ENCODE measurements at regions of chr12 and their contacts with region 1.

Region 1: DNA sequence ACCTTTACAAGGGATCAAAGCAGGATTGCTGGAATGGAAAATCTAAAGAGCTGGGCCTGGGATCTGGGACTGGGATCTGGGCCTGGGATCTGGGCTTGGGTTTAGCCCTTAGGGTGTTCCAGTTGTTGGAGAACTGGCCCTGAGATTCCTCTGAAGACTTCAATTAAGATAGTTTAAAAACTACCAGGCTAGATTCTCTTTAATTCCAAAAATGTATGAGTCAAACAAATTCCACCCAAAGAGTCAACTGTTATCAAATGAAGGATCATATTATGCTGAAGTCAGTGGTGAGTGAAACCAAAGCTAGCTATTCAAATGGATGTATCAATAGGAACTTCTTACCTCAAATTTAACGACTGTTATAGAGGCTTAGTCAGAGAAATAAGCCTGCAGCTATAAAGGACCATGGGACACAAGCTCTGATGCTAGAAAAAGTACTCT is 40.5 kb downstream of the LIMA1 start:
- DNase-seq: peak; percentile 77
- H3K4me3 ChIP-seq: no peak overlapping the region
- H3K27me3 ChIP-seq: no peaks in the 10 kb centered on the region
- CTCF ChIP-seq: no peak

Region 2: GRCh38 chr12:50211392-50212070 is 31.2 kb before region 1 on chr12:
- CTCF ChIA-PET with region 1: interaction called, 4 read pairs
- POLR2A ChIA-PET with region 1: interaction called, 19 read pairs
- DNase-seq: no peak
- H3K4me3 ChIP-seq: no peak overlapping the region
- H3K27me3 ChIP-seq: no peaks in the 10 kb centered on the region
- CTCF ChIP-seq: no peak

Region 3: GRCh38 chr12:50222275-50222795 is 20.4 kb before region 1 on chr12:
- CTCF ChIA-PET with region 1: interaction called, 13 read pairs
- POLR2A ChIA-PET with region 1: interaction called, 6 read pairs
- DNase-seq: peak; percentile 84
- H3K4me3 ChIP-seq: peak overlapping the region; percentile 98
- H3K27me3 ChIP-seq: no peaks in the 10 kb centered on the region
- CTCF ChIP-seq: peak; percentile 55

Region 4: DNA sequence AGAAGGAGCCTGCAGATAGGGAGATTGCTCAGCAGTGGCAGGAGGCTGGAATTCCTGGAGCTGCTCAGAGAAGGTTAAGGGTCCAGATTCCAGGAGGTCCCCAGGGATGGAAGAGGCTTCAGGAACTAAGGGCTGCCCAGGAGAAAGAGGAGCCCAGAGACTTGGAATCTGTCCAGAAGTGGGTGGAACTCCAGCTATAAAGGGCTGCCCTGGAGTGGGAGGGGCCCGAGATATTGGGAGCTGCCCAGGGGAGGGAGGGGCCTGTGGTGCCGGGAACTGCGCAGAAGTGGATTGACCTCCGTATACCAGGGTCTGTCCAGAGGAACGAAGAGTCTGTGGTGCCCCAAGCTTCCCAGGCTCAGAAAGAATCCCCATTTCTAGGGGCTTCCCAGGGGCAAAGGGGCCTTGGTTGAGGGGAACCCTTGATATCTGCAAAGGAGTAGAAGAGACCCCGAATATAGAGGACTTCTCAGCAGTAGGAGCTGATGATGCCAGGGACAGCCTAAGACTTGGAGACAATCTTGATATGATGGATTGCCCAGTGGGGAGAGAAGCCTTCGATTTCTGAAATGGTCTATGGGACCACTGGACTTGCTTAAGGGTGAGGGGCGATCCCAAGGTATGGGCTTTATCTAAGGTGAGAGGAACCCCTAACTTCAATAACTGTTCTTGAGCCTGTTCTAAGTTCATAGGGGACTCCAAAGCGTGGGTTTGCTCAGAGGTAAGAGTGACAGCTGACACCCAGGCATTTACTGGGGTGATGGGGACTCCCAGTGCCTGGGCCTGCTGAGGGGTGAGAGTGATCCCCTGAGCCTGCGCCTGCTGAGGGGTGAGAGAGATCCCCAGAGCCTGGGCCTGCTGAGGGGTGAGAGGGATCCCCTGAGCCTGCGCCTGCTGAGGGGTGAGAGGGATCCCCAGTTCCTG is 108.6 kb after region 1 on chr12:
- CTCF ChIA-PET with region 1: no interaction called
- POLR2A ChIA-PET with region 1: no interaction called
- DNase-seq: no peak
- H3K4me3 ChIP-seq: no peak overlapping the region
- H3K27me3 ChIP-seq: peaks cover 1% of the 10 kb centered on the region; the same call in 1 of the 2 replicates
- CTCF ChIP-seq: no peak